ENCODE measurements at regions of chr2 and their contacts with region 1.

Region 1: GRCh38 chr2:204944927-204945326 is 399.7 kb downstream of the PARD3B start:
- DNase-seq: no peak
- ATAC-seq: no peak
- H3K4me3 ChIP-seq: no peak overlapping the region
- H3K27ac ChIP-seq: no peak overlapping the region
- H3K4me1 ChIP-seq: peaks cover 14% of the 10 kb centered on the region
- H3K27me3 ChIP-seq: no peaks in the 10 kb centered on the region
- CTCF ChIP-seq: no peak
- EP300 ChIP-seq: no peak
- POLR2A ChIP-seq: no peak
- RAD21 ChIP-seq: no peak

Region 2: GRCh38 chr2:204909791-204910190 is 35.1 kb before region 1 on chr2:
- CTCF ChIA-PET with region 1: no interaction called
- POLR2A ChIA-PET with region 1: no interaction called
- in situ Hi-C with region 1: no loop called
- intact Hi-C with region 1: loop called (anchors 1 kb)
- DNase-seq: no peak
- ATAC-seq: no peak
- H3K4me3 ChIP-seq: no peak overlapping the region
- H3K27ac ChIP-seq: no peak overlapping the region
- H3K4me1 ChIP-seq: no peaks in the 10 kb centered on the region
- H3K27me3 ChIP-seq: no peaks in the 10 kb centered on the region
- CTCF ChIP-seq: no peak
- EP300 ChIP-seq: no peak
- POLR2A ChIP-seq: no peak
- RAD21 ChIP-seq: no peak

Region 3: GRCh38 chr2:205590759-205591158 is 645.8 kb after region 1 on chr2:
- CTCF ChIA-PET with region 1: no interaction called
- POLR2A ChIA-PET with region 1: no interaction called
- in situ Hi-C with region 1: no loop called
- intact Hi-C with region 1: no loop called
- DNase-seq: no peak
- ATAC-seq: no peak
- H3K4me3 ChIP-seq: no peak overlapping the region
- H3K27ac ChIP-seq: no peak overlapping the region
- H3K4me1 ChIP-seq: no peaks in the 10 kb centered on the region
- H3K27me3 ChIP-seq: no peaks in the 10 kb centered on the region
- CTCF ChIP-seq: no peak
- EP300 ChIP-seq: no peak
- POLR2A ChIP-seq: no peak
- RAD21 ChIP-seq: no peak